ENCODE measurements at regions of chr11 and their contacts with region 1.

Region 1: DNA sequence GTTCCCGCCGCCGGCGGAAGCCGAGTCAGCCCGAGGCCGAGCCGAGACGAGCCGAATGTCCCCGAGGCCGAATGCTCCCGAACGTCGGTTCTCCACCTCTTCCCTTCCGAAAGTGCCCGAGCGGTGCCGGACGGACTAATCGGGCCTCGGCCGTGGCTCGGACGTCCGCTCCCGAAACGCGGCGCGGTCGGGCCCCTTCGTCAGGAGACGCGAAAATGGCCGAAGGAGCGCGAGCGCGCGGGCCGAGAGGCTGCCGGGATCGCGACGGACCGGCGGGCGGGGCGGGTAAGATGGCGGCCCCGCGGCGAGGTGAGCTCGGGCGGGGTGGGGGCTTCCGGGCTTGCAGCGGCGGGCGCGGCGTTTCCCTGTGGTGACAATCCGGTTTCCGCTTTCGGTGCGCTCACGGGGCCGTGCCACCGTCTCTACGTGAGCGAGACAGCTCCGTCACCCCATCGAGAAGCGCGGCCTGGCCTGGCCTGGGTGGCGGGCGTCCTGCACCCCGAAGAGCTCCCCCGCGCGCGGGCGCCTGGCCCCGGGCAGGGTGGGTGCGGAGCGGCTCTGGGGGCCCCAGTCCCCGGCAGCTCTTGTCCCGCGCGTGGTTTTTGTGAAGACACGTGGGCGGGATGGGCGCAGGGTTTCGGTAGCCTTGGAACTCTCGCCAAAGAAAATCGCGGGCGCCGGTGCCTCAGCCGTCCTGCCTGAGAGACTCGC is at the start of gene TMEM80:
- DNase-seq: peak; percentile 98
- H3K4me3 Mint-ChIP-seq: peak within 1 kb of the TSS; percentile 83
- H3K27ac Mint-ChIP-seq: peak within 1 kb of the TSS; percentile 89
- H3K4me1 Mint-ChIP-seq: peaks cover 47% of the 10 kb centered on the region
- H3K27me3 Mint-ChIP-seq: no peaks in the 10 kb centered on the region
- total RNA-seq, gene TMEM80: 11.4 and 13.0 TPM in 2 replicates

Region 2: DNA sequence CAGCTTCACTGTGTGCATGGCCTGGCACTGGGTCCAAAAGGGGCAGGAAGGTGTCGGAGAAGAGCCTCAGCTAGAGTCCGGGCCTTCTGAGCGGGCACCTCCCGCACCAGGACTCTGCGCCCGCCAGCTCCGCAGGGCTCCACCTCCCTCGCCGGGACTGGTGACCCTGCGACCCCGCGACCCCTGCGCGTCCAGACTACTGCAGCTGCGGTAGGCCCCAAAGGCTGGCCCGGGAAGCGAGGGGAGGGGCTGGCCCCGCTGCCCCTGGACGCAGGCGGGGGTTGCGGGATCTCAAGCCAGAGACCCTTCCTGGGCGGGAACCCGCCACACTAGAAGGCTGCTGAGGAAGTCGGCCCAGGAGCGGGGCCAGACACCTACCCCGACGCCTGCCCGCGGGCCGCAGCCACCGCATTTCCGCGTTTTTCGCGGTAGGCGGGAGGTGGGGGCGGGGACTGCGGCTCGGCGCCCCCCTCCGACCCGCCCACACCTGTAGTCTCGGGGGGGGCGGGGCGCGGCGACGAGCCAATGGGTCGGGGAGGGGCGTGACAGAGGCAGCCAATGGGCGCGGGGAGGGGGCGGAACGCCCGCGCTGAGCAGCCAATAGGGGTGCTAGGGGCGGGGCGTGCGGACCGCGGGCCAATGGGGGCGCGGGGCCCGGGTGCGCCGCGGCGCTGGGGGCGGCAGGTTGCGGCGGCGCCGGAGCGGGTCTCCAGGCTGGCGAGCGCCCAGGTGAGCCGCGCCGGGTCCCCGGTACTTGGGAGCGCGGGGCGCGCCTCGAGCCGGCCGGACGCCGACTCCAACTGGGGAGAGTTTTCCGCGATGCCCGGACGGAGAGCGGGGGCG is 135.2 kb before region 1 on chr11 and contains the starts of genes LMNTD2 and RASSF7:
- intact Hi-C with region 1: loop called (anchors 2 kb)
- DNase-seq: peak; percentile 93
- H3K4me3 Mint-ChIP-seq: peak within 1 kb of the TSS; percentile 90
- H3K27ac Mint-ChIP-seq: peak within 1 kb of the TSS; percentile 60
- H3K4me1 Mint-ChIP-seq: peaks cover 4% of the 10 kb centered on the region
- H3K27me3 Mint-ChIP-seq: peaks cover 18% of the 10 kb centered on the region
- total RNA-seq, gene LMNTD2: 1.1 and 1.3 TPM in 2 replicates
- total RNA-seq, gene RASSF7: 19.6 and 20.3 TPM in 2 replicates

Region 3: DNA sequence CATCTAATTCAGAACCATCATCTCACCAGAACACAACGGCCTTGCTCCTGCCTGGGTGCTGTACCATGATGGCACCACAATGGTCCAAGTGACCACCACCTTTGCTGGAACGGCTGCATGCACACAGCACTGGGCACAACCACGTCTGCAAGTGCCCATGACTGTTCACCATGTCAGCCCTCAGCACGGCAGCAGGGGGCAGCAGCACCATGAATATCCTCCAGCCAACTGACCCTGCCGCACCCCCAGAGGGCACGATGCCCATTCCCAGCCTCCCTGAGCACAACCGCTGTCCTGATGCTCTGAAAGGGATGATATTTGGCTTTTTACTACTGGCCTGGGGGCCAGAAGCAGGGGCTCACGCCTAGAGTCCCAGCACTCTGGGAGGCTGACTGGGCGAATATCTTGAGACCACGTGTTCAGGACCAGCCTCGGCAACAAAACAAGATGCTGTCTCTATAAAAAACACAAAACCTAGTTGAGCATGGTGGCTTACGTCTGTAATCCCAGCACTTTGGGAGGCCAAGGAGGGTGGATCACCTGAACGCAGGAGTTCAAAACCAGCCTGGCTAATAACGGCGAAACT is 32.9 kb before region 1 on chr11:
- intact Hi-C with region 1: no loop called
- DNase-seq: peak; percentile 16
- H3K4me3 Mint-ChIP-seq: no peak overlapping the region
- H3K27ac Mint-ChIP-seq: no peak overlapping the region
- H3K4me1 Mint-ChIP-seq: no peaks in the 10 kb centered on the region
- H3K27me3 Mint-ChIP-seq: no peaks in the 10 kb centered on the region

Region 4: DNA sequence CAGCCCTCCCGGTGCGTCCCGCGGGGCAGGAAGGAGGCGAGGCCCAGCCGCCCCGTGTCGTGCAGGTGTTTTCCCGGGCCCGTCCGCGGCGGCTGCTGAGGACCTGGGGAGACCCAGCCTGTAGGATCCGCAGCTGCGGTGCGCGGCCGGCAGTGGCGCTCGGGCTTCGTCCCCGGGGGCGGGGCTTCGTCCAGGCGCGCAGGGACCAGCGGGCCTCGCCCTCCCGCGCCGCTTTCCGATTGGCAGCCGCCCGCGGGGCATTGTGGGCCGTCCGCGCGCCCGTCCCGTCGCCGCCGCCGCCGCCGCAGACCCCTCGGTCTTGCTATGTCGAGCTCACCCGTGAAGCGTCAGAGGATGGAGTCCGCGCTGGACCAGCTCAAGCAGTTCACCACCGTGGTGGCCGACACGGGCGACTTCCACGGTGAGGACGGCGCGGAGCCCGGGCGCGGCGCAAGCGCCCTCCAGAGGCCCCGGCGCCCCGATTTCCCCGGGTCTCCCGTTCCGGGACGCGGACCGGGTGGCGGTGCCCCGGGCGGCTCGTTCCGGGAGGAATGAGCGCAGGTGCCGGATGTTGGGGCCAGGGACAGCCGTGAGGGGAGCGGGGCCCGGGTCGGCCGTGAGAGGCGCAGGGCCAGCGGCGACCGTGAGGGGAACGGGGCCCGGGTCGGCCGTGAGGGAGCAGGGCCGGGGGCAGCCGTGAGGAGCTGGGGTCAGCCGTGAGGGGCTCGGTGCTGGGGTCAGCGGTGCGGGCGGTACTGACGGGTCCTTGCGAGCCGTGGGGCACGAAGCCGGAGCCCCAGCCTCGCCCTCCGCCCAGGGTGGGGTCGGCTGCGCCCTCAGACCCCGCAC is 51.7 kb after region 1 on chr11 and contains the start of gene TALDO1:
- intact Hi-C with region 1: no loop called
- DNase-seq: peak; percentile 84
- H3K4me3 Mint-ChIP-seq: peak within 1 kb of the TSS; percentile 85
- H3K27ac Mint-ChIP-seq: peak within 1 kb of the TSS; percentile 77
- H3K4me1 Mint-ChIP-seq: peaks cover 18% of the 10 kb centered on the region
- H3K27me3 Mint-ChIP-seq: no peaks in the 10 kb centered on the region
- total RNA-seq, gene TALDO1: 270 and 275 TPM in 2 replicates

Region 5: DNA sequence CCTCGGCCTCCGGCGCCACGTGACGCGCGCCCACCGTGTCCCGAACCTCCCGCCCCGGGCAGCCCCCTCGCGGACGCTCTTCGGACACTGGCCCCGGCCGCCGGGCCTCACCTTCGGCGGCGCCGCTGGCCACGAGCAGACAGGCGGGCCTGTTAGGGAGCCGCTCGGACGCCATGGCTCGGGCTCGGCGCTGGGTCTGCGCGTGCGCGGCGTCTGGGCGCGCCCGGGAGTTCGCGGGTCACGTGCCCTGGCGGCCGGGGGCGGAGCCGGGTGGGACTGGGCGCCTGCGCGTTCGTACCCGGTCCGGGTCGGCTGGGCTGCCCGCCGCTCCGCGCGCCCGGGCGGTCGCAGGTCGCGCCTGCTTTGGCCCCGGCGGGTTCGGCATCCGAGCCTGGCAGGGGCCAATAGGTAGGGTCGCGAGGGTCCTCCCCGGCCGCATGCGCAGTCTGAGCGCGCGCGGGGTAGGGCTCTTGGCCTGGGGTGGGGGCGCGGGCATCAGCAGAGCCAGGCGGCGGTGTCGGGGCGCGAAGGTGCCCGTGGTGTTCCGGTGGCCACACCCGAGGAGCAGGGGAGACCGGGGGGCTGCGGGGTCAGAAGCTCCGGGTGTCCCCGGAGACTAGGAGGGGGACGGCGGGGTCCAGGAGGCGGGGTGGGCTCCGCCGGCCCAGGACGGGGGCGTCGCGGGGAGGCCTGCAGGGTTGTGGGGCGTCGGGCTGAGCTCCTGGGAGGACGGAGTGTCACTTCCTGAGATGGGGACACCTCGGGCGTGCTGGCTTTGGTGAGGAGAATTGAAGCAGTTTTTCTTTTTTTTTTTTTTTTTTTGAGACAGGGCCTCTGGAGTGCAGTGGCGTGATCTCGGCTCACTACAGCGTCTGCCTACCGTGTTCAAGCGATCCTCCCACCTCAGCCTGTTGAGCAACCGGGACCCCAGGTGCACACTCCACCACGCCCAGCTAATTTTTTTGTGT is 81.9 kb after region 1 on chr11 and contains the start of gene GATD1:
- intact Hi-C with region 1: loop called (anchors 1 kb)
- DNase-seq: peak; percentile 93
- H3K4me3 Mint-ChIP-seq: peak within 1 kb of the TSS; percentile 88
- H3K27ac Mint-ChIP-seq: peak within 1 kb of the TSS; percentile 81
- H3K4me1 Mint-ChIP-seq: peaks cover 19% of the 10 kb centered on the region
- H3K27me3 Mint-ChIP-seq: no peaks in the 10 kb centered on the region
- total RNA-seq, gene GATD1: 68.0 and 75.2 TPM in 2 replicates

Measured in activated T-helper 2 cell treated with anti-CD3 and anti-CD28 coated beads, Interferon-gamma antibody, Interleukin-2, Interleukin-4, amounts not matched to agents 10 μg/mL and 5 μg/mL and 100 μg/mL, durations not matched to agents 14 hours and 24 hours and 36 hours (primary cell).